GM12878 (cell line): ENCODE measurements at regions of chr17 and their contacts with region 1.

Region 1: GRCh38 chr17:17859909-17860765 is 23.4 kb upstream of the SREBF1 start:
- DNase-seq: no peak
- ATAC-seq: peak; percentile 99
- H3K4me3 ChIP-seq: no peak overlapping the region
- H3K27ac ChIP-seq: no peak overlapping the region
- H3K4me1 ChIP-seq: no peaks in the 10 kb centered on the region
- H3K27me3 ChIP-seq: no peaks in the 10 kb centered on the region
- CTCF ChIP-seq: peak; percentile 98; a peak in 5 of 6 replicates
- EP300 ChIP-seq: no peak
- POLR2A ChIP-seq: no peak
- RAD21 ChIP-seq: peak; percentile 96

Region 2: GRCh38 chr17:16529906-16530305 is 1330.2 kb before region 1 on chr17:
- CTCF ChIA-PET with region 1: no interaction called
- POLR2A ChIA-PET with region 1: no interaction called
- RAD21 ChIA-PET with region 1: no interaction called
- SMC1A ChIA-PET with region 1: no interaction called
- in situ Hi-C with region 1: no loop called
- intact Hi-C with region 1: no loop called
- DNase-seq: no peak
- ATAC-seq: no peak
- H3K4me3 ChIP-seq: no peak overlapping the region
- H3K27ac ChIP-seq: no peak overlapping the region
- H3K4me1 ChIP-seq: no peaks in the 10 kb centered on the region
- H3K27me3 ChIP-seq: no peaks in the 10 kb centered on the region
- CTCF ChIP-seq: no peak
- EP300 ChIP-seq: no peak
- POLR2A ChIP-seq: no peak
- RAD21 ChIP-seq: no peak

Region 3: GRCh38 chr17:17356149-17356930 is 503.8 kb before region 1 on chr17:
- CTCF ChIA-PET with region 1: no interaction called
- POLR2A ChIA-PET with region 1: no interaction called
- RAD21 ChIA-PET with region 1: no interaction called
- SMC1A ChIA-PET with region 1: no interaction called
- in situ Hi-C with region 1: loop called (anchors 10 kb)
- intact Hi-C with region 1: no loop called
- DNase-seq: peak; percentile 2
- ATAC-seq: peak; percentile 92
- H3K4me3 ChIP-seq: no peak overlapping the region
- H3K27ac ChIP-seq: no peak overlapping the region
- H3K4me1 ChIP-seq: no peaks in the 10 kb centered on the region
- H3K27me3 ChIP-seq: no peaks in the 10 kb centered on the region
- CTCF ChIP-seq: peak; percentile 99 to 100 (median 100)
- EP300 ChIP-seq: no peak
- POLR2A ChIP-seq: no peak
- RAD21 ChIP-seq: peak; percentile 98

Region 4: DNA sequence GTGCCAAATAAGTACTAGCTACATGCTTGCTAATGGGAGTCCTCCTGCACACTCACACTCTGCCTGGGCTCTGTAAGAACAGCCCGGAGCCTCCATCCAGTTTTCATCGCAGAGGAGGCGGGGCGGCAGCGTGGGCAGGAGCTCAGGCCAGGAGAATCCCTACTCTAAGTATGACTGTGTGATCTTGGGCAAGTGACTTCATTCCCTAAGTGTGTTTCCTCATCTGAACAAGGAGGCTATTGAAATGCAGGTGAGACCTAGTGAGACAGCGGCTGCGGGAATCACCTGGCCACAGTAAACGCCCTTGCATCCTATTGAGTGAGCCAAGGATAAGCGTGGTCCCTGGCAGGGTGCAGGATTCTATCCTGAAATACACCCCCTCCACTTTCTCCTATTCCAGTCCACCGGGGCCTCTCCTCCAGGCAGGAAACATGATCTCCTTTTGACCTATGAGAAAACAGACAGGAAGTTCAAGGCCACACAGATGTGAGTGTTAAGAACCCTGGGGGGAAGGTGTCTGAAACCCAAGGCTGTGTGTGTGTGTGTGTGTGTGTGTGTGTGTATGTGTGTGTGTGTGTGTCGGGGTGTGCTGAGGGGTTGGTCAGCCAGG is 184.1 kb before region 1 on chr17:
- CTCF ChIA-PET with region 1: interaction called, 32 read pairs
- POLR2A ChIA-PET with region 1: no interaction called
- RAD21 ChIA-PET with region 1: interaction called, 5 read pairs
- SMC1A ChIA-PET with region 1: interaction called, 22 read pairs
- in situ Hi-C with region 1: loop called (anchors 5 kb)
- intact Hi-C with region 1: loop called (anchors 1 kb)
- DNase-seq: no peak
- ATAC-seq: peak; percentile 64
- H3K4me3 ChIP-seq: no peak overlapping the region
- H3K27ac ChIP-seq: no peak overlapping the region
- H3K4me1 ChIP-seq: peaks cover 27% of the 10 kb centered on the region
- H3K27me3 ChIP-seq: no peaks in the 10 kb centered on the region; a peak in 1 of 4 replicates
- CTCF ChIP-seq: no peak
- EP300 ChIP-seq: no peak
- POLR2A ChIP-seq: no peak
- RAD21 ChIP-seq: no peak

Region 5: DNA sequence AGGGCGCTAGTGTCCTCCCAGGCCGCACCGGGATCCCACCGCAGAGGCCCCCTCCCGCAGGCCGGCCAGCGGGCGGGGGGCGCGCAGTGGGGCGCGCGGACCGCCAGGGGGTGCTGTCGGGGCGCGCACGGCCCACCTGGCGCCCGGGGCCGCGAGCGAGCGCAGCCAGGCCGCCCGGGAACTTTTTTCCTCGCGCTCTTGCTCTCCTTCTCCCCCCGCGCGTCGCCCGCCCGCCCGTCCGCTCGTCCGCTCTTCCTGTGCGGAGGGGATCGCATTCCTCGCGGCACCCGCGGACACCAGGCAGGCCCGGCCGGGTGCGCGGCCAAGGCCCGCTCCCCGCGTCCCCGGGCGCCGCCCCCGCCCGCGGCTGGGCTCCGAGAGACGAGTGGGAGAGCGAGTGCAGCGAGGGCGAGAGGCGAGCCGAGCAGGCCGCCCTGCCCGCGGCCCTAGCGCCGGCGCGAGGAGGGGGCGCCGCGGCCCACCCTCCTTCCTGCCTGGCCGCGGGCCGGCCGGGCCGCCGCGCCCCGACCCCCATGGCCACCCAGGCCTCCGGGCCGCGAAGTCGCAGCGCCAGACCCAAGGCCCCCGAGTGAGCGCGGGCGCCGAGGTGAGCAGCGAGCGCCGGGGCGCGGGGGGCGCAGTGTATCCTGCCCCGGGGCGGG is 178.8 kb before region 1 on chr17 and contains the start of gene RAI1:
- CTCF ChIA-PET with region 1: interaction called, 32 read pairs
- POLR2A ChIA-PET with region 1: no interaction called
- RAD21 ChIA-PET with region 1: interaction called, 7 read pairs
- SMC1A ChIA-PET with region 1: interaction called, 22 read pairs
- in situ Hi-C with region 1: loop called (anchors 5 kb)
- intact Hi-C with region 1: loop called (anchors 1 kb)
- DNase-seq: no peak
- ATAC-seq: peak; percentile 41
- H3K4me3 ChIP-seq: peak within 1 kb of the TSS; percentile 99
- H3K27ac ChIP-seq: peak within 1 kb of the TSS; percentile 90
- H3K4me1 ChIP-seq: peaks cover 30% of the 10 kb centered on the region
- H3K27me3 ChIP-seq: no peaks in the 10 kb centered on the region; a peak in 1 of 4 replicates
- CTCF ChIP-seq: peak; percentile 48 to 80 (median 63); a peak in 5 of 6 replicates
- EP300 ChIP-seq: no peak
- POLR2A ChIP-seq: no peak; the same call in 1 of the 2 replicates
- RAD21 ChIP-seq: peak; percentile 84
- polyA plus RNA-seq, gene RAI1: 0.66 to 0.74 TPM

Region 6: DNA sequence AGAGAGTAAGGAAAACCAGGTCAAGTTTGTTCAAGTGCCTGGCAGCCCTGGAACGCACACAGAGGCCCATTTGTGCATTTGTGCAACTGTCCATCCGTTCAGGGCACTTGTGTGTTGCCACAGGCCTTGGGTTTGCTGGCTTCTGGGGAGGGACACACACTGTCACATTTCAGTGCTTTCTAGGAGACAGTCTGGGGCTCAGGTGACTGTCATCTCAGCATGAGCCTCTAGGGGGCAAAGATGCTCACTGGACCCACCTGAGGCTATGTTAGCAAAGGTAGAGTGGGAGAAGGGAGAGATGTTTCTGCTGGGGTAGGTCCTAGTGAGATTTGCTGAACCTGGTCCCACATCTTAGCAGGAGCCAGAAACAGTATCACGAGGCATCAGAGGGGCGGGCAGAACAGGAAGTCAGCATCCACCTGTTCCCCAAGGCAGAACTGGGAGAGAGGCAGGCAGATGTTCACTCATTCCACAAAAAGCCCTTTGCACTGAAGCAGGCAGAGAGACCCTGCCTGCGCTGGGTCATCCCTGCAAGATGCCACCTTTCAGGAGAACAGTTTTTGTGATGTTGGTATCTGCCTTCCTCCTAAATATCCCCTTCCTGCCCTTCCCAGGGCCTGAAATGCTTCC is 130.4 kb before region 1 on chr17:
- CTCF ChIA-PET with region 1: interaction called, 3 read pairs
- POLR2A ChIA-PET with region 1: no interaction called
- RAD21 ChIA-PET with region 1: interaction called, 3 read pairs
- SMC1A ChIA-PET with region 1: no interaction called
- in situ Hi-C with region 1: no loop called
- intact Hi-C with region 1: loop called (anchors 2 kb)
- DNase-seq: no peak
- ATAC-seq: peak; percentile 93
- H3K4me3 ChIP-seq: no peak overlapping the region
- H3K27ac ChIP-seq: no peak overlapping the region
- H3K4me1 ChIP-seq: peaks cover 12% of the 10 kb centered on the region
- H3K27me3 ChIP-seq: no peaks in the 10 kb centered on the region
- CTCF ChIP-seq: peak; percentile 74 to 89 (median 85)
- EP300 ChIP-seq: no peak
- POLR2A ChIP-seq: no peak
- RAD21 ChIP-seq: peak; percentile 78

Region 7: GRCh38 chr17:17812211-17813057 is 47.7 kb before region 1 on chr17:
- CTCF ChIA-PET with region 1: interaction called, 86 read pairs
- POLR2A ChIA-PET with region 1: no interaction called
- RAD21 ChIA-PET with region 1: interaction called, 8 read pairs
- SMC1A ChIA-PET with region 1: interaction called, 14 read pairs
- in situ Hi-C with region 1: loop called (anchors 5 kb)
- intact Hi-C with region 1: loop called (anchors 1 kb)
- DNase-seq: no peak
- ATAC-seq: peak; percentile 77
- H3K4me3 ChIP-seq: no peak overlapping the region
- H3K27ac ChIP-seq: no peak overlapping the region
- H3K4me1 ChIP-seq: peaks cover 8% of the 10 kb centered on the region
- H3K27me3 ChIP-seq: no peaks in the 10 kb centered on the region
- CTCF ChIP-seq: peak; percentile 97 to 99 (median 98); a peak in 5 of 6 replicates
- EP300 ChIP-seq: no peak
- POLR2A ChIP-seq: no peak
- RAD21 ChIP-seq: peak; percentile 74

Region 8: DNA sequence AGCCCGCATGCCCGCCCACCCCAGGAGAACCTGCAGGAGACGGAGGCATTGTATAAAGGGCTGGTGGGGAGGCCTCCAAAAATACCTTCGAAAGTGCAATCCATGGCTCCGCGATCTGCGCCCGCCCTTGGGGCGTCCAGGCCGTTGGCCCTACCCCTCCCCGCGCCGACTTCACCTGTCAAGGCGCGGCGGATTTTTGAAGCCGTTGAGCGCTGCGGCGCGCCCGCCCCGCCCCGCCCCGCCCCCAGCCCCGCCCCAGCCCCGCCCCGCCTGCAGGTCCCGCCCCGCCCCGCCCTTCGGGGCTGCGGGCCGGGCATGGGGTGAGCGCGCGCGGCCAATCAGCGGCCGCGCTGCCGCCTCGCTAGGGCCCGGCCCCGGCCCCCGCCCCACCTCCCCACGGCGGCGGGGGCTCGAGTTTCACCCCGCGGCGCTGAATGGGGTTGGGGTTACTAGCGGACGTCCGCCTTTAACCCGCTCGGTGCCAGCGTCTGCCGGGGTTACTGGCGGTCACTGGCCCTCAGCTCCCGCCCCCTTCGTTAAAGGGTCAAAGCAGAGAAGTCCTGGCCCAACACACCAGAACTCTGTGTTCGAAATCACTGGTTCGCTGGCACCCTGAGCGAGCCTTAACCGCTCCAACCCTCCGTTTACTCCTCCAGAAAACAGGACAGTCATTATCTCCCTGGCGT is 36.6 kb before region 1 on chr17:
- CTCF ChIA-PET with region 1: interaction called, 10 read pairs
- POLR2A ChIA-PET with region 1: interaction called, 4 read pairs
- RAD21 ChIA-PET with region 1: interaction called, 6 read pairs
- SMC1A ChIA-PET with region 1: no interaction called
- in situ Hi-C with region 1: no loop called
- intact Hi-C with region 1: no loop called
- DNase-seq: no peak
- ATAC-seq: peak; percentile 84
- H3K4me3 ChIP-seq: peak overlapping the region; percentile 63
- H3K27ac ChIP-seq: peak overlapping the region; percentile 82
- H3K4me1 ChIP-seq: peaks cover 52% of the 10 kb centered on the region
- H3K27me3 ChIP-seq: no peaks in the 10 kb centered on the region
- CTCF ChIP-seq: no peak
- EP300 ChIP-seq: no peak
- POLR2A ChIP-seq: peak; percentile 50; the same call in 1 of the 2 replicates
- RAD21 ChIP-seq: no peak

Region 9: GRCh38 chr17:17959520-17960361 is 99.6 kb after region 1 on chr17:
- CTCF ChIA-PET with region 1: no interaction called
- POLR2A ChIA-PET with region 1: no interaction called
- RAD21 ChIA-PET with region 1: no interaction called
- SMC1A ChIA-PET with region 1: no interaction called
- in situ Hi-C with region 1: no loop called
- intact Hi-C with region 1: no loop called
- DNase-seq: peak; percentile 68
- ATAC-seq: peak; percentile 85
- H3K4me3 ChIP-seq: peak overlapping the region; percentile 6; the same call in 1 of the 2 replicates
- H3K27ac ChIP-seq: peak overlapping the region; percentile 63
- H3K4me1 ChIP-seq: peaks cover 23% of the 10 kb centered on the region
- H3K27me3 ChIP-seq: no peaks in the 10 kb centered on the region
- CTCF ChIP-seq: no peak
- EP300 ChIP-seq: no peak
- POLR2A ChIP-seq: no peak
- RAD21 ChIP-seq: no peak